ENCODE measurements at regions of chr7 and their contacts with region 1.

Region 1: GRCh38 chr7:130410868-130411541 is 29.8 kb downstream of the CEP41 start:
- DNase-seq: no peak
- ATAC-seq: no peak
- H3K4me3 ChIP-seq: no peak overlapping the region
- H3K27ac ChIP-seq: no peak overlapping the region
- H3K4me1 ChIP-seq: no peaks in the 10 kb centered on the region
- H3K27me3 ChIP-seq: peaks cover 0 to 4% of the 10 kb centered on the region in 2 experiments; a peak in 3 of 5 replicates
- CTCF ChIP-seq: no peak
- EP300 ChIP-seq: no peak
- POLR2A ChIP-seq: no peak
- RAD21 ChIP-seq: no peak

Region 2: GRCh38 chr7:130421684-130422083 is 10.7 kb after region 1 on chr7:
- CTCF ChIA-PET with region 1: no interaction called
- POLR2A ChIA-PET with region 1: interaction called, 11 read pairs
- in situ Hi-C with region 1: no loop called
- intact Hi-C with region 1: no loop called
- DNase-seq: no peak
- ATAC-seq: no peak; the same call in 2 of the 3 replicates
- H3K4me3 ChIP-seq: no peak overlapping the region
- H3K27ac ChIP-seq: no peak overlapping the region
- H3K4me1 ChIP-seq: no peaks in the 10 kb centered on the region
- H3K27me3 ChIP-seq: peaks cover 4 to 15% of the 10 kb centered on the region in 2 experiments; a peak in 2 of 5 replicates
- CTCF ChIP-seq: no peak
- EP300 ChIP-seq: no peak
- POLR2A ChIP-seq: no peak
- RAD21 ChIP-seq: no peak

Region 3: GRCh38 chr7:130505753-130506152 is 94.7 kb after region 1 on chr7:
- CTCF ChIA-PET with region 1: no interaction called
- POLR2A ChIA-PET with region 1: no interaction called
- in situ Hi-C with region 1: no loop called
- intact Hi-C with region 1: no loop called
- DNase-seq: no peak
- ATAC-seq: no peak
- H3K4me3 ChIP-seq: no peak overlapping the region
- H3K27ac ChIP-seq: no peak overlapping the region
- H3K4me1 ChIP-seq: no peaks in the 10 kb centered on the region
- H3K27me3 ChIP-seq: no peaks in the 10 kb centered on the region
- CTCF ChIP-seq: no peak
- EP300 ChIP-seq: no peak
- POLR2A ChIP-seq: no peak
- RAD21 ChIP-seq: no peak

Region 4: GRCh38 chr7:130529417-130529816 is 118.4 kb after region 1 on chr7:
- CTCF ChIA-PET with region 1: no interaction called
- POLR2A ChIA-PET with region 1: no interaction called
- in situ Hi-C with region 1: no loop called
- intact Hi-C with region 1: no loop called
- DNase-seq: no peak
- ATAC-seq: no peak
- H3K4me3 ChIP-seq: no peak overlapping the region
- H3K27ac ChIP-seq: no peak overlapping the region
- H3K4me1 ChIP-seq: peaks cover 0 to 4% of the 10 kb centered on the region in 2 experiments; a peak in 2 of 5 replicates
- H3K27me3 ChIP-seq: no peaks in the 10 kb centered on the region
- CTCF ChIP-seq: no peak
- EP300 ChIP-seq: no peak
- POLR2A ChIP-seq: no peak
- RAD21 ChIP-seq: no peak

Region 5: GRCh38 chr7:130699686-130700085 is 288.7 kb after region 1 on chr7:
- CTCF ChIA-PET with region 1: no interaction called
- POLR2A ChIA-PET with region 1: no interaction called
- in situ Hi-C with region 1: no loop called
- intact Hi-C with region 1: no loop called
- DNase-seq: no peak
- ATAC-seq: peak; percentile 31; the same call in 1 of the 3 replicates
- H3K4me3 ChIP-seq: no peak overlapping the region
- H3K27ac ChIP-seq: no peak overlapping the region
- H3K4me1 ChIP-seq: no peaks in the 10 kb centered on the region
- H3K27me3 ChIP-seq: peaks cover 0 to 4% of the 10 kb centered on the region in 2 experiments; a peak in 2 of 5 replicates
- CTCF ChIP-seq: no peak
- EP300 ChIP-seq: no peak
- POLR2A ChIP-seq: no peak
- RAD21 ChIP-seq: no peak

Region 6: DNA sequence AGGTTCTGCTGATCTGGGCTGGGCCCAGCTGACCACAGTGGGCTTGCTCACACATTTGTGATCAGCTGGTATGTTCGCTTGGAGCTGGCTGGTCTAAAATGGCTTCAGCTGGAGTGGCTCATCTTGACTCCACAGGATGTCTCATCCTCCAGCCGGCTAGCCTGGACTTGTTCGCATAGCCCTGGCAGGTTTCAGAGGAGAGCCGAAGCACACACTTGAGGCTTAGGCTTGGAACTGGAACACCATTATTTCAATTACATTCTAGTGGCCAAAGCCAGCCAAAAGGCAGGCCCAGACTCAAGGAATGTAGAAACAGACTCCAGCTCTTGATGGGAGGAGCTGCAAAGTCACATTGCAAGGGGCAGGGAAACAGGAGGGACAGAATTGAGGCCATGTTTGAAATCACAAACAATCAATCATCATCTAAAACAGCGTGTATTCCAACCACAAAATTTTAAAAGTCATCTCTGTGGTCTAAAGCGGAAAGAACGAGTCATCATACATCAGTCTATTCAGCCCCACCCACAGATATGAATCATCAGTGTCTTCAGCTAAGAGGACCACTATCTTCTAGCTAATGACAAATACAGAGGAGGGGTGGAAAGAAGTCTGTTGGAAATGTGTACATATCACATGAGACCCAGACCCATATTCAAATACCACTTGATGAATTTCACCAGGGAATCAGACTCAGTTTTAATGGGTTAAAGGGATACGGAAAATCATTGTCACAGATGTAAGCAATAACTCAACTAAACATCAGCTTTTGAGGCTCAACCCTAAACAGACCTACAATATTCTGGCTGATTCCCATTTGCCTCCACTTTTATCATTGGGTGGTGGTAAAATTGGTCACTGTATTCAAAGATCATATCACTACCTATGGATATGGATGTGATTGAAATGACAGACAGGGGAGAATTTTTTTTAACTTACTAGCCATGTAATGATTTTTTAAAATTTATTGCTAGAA is 777.6 kb after region 1 on chr7:
- CTCF ChIA-PET with region 1: no interaction called
- POLR2A ChIA-PET with region 1: no interaction called
- in situ Hi-C with region 1: no loop called
- intact Hi-C with region 1: no loop called
- DNase-seq: peak; percentile 38 to 61 (median 59)
- ATAC-seq: peak; percentile 78
- H3K4me3 ChIP-seq: no peak overlapping the region
- H3K27ac ChIP-seq: no peak overlapping the region
- H3K4me1 ChIP-seq: peaks cover 0 to 5% of the 10 kb centered on the region in 2 experiments; a peak in 2 of 5 replicates
- H3K27me3 ChIP-seq: peaks cover 14 to 30% of the 10 kb centered on the region in 2 experiments; a peak in 3 of 5 replicates
- CTCF ChIP-seq: no peak
- EP300 ChIP-seq: peak; percentile 65
- POLR2A ChIP-seq: no peak
- RAD21 ChIP-seq: 0 out of 4 replicates have a peak, but pooled peaks of 1 of the 2 experiments have one; percentile 8